Posterior vena cava (tissue), 2 donors: ENCODE measurements at regions of chr7 and their contacts with region 1.

Region 1: DNA sequence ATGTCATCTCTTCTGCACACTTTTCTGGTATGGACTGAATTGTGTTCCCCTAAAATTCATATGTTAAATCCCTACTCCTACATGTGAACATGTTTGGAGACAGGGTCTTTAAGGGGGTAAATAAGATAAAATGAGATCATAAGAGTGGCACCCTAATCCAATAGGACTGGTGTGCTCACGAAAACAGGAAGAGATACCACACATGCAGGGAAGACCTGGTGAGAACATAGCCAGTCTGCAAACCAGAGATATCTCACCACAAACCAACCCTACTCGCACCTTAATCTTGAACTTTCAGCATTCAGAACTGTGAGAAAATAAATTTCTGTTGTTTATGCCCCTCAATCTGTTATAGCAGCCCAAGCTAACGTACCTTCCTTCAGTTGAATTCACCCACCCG is 51.8 kb downstream of the VWDE start:
- DNase-seq: no peak

Region 2: DNA sequence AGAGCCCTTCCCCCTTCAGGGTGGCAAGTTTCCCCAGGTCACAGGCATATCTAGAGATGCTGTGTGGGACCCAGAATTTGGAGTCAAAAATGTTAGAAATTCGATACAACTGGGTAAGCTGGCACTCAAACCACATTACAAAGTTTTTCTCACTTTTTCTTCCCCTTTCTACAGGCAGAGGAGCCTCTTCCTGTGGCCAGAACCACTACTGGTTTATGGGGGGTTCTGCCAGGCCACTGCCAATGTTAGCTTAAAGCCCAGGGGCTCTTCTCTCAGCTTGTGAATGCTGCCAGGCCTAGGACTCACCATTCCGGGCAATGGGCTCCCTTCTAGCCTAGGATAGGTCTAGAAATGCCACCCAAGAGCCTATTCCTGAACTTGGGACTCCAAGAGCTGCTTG is 1996.0 kb before region 1 on chr7:
- intact Hi-C with region 1: loop called in 1 of 2 experiments (anchors 5 kb)
- DNase-seq: no peak